Left ventricle myocardium superior (tissue), 1 donor: ENCODE measurements at regions of chr17 and their contacts with region 1.

Region 1: DNA sequence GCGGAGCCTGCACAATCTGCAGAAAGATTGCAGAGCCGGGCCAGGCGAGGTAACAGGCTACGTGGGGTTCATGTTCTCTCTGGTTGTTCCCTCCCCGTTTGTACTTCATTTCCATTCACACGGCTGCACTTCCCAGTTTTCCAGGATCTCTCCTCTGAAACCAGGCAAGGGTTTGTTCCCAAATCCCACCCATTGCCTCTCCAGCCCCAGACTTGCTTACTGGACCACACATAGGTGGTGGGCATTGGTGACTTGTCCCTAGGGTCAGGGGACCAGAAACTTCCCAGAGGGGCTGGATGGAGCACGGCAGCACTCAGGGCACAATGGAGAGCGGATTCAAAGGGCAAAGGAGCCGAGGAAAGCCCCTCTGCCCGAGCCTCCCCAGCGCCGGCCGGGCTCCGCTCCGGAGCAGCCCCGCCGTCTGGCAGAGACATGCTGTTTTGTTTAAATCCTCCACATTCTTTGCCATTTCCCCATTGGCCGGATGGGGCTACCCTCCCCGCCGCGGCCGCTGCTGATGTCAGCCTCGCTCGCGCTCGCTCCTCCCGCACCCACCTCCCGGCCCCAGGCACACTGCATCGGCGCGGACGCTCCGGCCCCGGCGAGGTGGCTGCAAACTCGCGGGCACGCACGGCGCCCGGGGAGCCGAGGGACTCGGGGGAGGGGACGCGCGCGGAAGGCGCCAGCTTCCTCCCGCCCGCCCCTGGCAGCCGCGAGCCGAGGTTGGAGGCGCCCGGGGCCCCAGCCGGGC is at the start of gene PITPNC1:
- DNase-seq: peak; percentile 92
- ATAC-seq: peak; percentile 85
- total RNA-seq, gene PITPNC1: 11.0 TPM

Region 2: GRCh38 chr17:67244431-67245072 is 132.4 kb before region 1 on chr17:
- intact Hi-C with region 1: loop called (anchors 5 kb)
- DNase-seq: peak; percentile 41
- ATAC-seq: peak; percentile 43

Region 3: DNA sequence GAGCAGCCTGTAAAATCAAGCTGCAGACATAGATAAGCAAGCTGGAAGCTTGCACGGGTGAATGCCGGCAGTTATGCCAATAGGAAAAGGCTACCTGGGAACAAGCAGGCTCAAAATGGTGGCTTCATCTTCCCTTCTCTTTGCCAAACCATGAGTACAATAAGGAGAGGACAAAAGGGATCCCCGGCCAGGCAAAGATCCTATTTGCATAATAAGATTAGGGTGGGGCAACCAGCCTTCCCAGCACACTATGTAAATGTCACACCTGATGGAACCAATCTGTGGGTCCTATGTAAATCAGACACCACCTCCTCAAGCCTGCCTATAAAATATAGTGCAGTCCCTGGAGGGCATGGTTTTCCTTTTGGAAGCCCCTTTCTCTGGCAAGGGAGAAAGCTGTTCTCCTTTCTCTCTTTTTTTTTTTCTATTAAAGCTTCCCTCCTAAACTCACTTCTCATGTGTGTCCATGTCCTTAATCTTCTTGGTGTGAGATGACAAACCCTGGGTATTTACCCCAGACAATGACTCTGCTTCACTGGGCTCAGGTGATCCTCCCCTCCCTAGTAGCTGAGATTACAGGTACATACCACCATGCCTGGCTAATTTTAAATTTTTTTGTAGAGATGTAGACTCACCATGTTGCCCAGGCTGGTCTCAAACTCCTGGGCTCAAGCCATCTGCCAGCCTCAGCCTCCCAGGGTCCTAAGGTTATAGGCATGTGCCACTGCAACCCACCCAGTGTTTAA is 54.7 kb before region 1 on chr17:
- intact Hi-C with region 1: no loop called
- DNase-seq: no peak
- ATAC-seq: no peak

Region 4: GRCh38 chr17:67475236-67475937 is 98.5 kb after region 1 on chr17:
- intact Hi-C with region 1: loop called (anchors 2 kb)
- DNase-seq: peak; percentile 82
- ATAC-seq: peak; percentile 80

Region 5: DNA sequence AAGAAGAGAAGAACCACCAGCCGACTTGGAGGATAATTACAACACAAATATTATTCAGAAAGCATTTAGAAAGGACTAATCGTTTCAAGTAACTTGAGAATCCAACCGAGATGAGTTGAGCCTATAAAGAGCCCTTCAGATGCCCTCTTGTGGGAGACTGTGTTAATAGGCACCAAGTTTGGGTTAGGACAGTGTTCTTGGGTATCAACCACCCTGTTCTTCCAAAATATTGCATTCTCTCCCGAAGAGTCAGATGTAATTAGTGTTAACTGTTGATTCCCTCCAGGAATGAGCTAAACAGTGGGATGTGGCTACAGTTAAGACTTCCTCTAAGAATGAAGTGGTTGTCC is 253.0 kb after region 1 on chr17:
- intact Hi-C with region 1: loop called (anchors 10 kb)
- DNase-seq: no peak
- ATAC-seq: peak; percentile 66

Region 6: DNA sequence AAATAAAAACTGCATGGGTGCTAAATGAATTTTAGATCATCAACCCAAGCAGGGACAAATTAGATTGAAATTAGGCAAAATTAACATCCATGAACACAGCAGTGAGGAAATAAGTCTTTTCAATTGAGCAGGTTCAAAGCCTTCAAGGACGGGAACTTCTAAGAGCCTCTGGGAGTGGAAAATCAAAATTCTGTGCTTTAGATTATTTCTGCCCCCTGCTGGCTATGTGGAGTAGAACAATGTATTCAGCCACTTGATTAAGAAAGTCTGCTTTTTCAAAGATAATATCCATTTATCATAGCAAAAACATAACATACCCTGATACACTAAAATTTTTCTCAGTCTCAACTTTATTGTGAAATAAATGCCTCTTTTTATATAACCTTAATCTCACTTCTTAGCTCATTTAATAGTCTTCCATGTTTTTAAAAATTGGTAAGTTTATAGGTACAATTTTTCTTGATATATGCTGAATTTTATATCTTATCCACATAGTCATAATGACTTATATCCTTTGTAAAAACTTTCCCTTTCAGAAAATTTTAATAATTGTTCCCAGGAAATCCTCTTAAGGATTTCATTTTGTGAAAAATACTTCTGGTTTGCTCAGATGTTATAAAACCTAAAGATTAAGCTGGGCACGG is 312.7 kb after region 1 on chr17:
- intact Hi-C with region 1: loop called (anchors 5 kb)
- DNase-seq: no peak
- ATAC-seq: peak; percentile 51